Head of caudate nucleus (tissue), 42 donors: ENCODE measurements at regions of chr16 and their contacts with region 1.

Region 1: DNA sequence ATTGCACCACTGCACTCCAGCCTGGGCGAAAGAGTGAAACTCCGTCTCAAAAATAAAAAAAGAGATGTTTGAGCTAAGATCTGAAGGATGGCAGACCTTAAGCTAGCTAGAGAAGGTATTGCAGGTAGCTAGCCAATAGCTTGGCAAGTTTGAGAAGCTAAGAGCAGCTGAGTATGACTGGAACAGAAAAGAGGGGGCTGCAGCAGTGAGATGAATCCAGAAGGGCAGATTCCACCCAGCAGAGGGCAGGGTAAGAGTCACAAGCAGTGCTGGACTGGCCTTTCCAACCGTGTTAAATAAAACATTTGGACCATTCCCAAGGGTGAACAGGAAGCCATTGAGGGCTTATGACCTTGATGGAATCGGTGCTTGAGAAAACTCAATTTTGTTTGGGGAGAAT is 5.7 kb upstream of the PHAF1 start:
- DNase-seq: peak in 8 of 42 donors; percentile 14 to 55 (median 29)

Region 2: GRCh38 chr16:66977341-66978113 is 126.5 kb before region 1 on chr16:
- intact Hi-C with region 1: loop called (anchors 5 kb)
- DNase-seq: peak; percentile 77 to 98 (median 93)